SK-N-SH (cell line): ENCODE measurements at regions of chr4 and their contacts with region 1.

Region 1: DNA sequence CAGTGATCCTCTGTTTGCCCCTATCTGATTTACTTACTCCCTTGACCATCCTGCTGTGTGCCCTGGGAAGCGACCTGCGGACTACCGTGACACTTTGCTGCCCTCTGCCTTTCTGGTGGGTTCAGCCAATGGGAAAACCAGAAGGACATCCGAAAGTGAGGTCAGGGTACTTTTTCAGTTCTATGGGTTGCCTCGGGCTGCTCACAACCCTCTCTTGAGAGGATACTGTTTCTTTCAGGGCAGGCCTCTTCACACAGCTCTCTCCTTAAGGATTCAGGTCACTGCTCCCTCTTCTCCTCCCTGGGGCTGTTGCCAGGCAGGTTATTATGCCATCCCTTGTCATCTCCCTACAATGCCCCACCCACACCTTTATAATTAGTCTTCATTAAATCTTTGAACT is 21.4 kb downstream of the PLAC8 start:
- DNase-seq: peak; percentile 21
- H3K4me3 ChIP-seq: no peak overlapping the region
- H3K27ac ChIP-seq: no peak overlapping the region
- H3K4me1 ChIP-seq: no peaks in the 10 kb centered on the region
- H3K27me3 ChIP-seq: no peaks in the 10 kb centered on the region
- CTCF ChIP-seq: no peak
- EP300 ChIP-seq: no peak
- RAD21 ChIP-seq: 0 out of 2 replicates have a peak, but pooled peaks have one; percentile 14

Region 2: GRCh38 chr4:83054928-83055327 is 38.2 kb before region 1 on chr4:
- CTCF ChIA-PET with region 1: no interaction called
- POLR2A ChIA-PET with region 1: no interaction called
- DNase-seq: peak; percentile 10
- H3K4me3 ChIP-seq: no peak overlapping the region
- H3K27ac ChIP-seq: no peak overlapping the region
- H3K4me1 ChIP-seq: no peaks in the 10 kb centered on the region
- H3K27me3 ChIP-seq: no peaks in the 10 kb centered on the region
- CTCF ChIP-seq: peak; percentile 66
- EP300 ChIP-seq: no peak
- RAD21 ChIP-seq: peak; percentile 45

Region 3: GRCh38 chr4:83074086-83074704 is 18.9 kb before region 1 on chr4:
- CTCF ChIA-PET with region 1: interaction called, 12 read pairs
- POLR2A ChIA-PET with region 1: no interaction called
- DNase-seq: peak; percentile 56
- H3K4me3 ChIP-seq: peak overlapping the region in 1 of 2 experiments; percentile 14; a peak in 1 of 4 replicates
- H3K27ac ChIP-seq: peak overlapping the region in 1 of 2 experiments; percentile 83; a peak in 2 of 4 replicates
- H3K4me1 ChIP-seq: peaks cover 0 to 6% of the 10 kb centered on the region in 2 experiments; a peak in 1 of 4 replicates
- H3K27me3 ChIP-seq: no peaks in the 10 kb centered on the region
- CTCF ChIP-seq: peak; percentile 86
- EP300 ChIP-seq: no peak
- RAD21 ChIP-seq: peak; percentile 73

Region 4: DNA sequence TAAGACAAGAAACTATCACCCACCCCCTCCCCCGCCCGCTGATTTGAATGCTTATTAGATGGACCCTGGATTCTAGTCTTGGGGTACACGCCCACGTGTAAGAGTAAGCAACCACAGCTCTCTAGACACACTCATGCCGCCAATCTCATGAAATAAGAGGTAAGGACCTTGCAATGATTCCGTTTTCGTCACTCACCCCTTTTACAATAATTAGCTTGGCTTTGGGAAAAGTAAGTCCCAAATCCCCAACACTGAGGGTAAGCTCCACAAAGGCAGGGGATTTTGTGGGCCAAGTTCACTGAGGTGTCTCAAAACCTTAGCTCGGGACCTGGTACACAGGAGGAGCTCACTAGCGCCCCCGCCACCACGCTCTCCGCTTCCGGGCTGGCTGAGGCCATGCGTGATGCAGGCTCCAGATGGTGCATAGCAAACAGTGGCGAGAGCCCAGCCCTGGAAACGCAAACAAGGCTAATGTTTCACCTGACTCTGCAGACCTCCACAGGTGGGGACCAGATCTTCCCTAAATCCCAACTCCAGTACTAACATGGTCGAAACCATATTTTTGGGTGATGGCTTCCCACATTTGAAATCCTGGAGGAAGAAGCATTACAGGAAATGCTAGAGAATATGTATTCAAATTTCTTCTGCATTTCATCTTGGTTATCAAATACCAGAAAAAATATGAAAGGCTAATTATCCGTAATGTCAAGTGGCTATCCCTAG is 17.3 kb after region 1 on chr4:
- CTCF ChIA-PET with region 1: interaction called, 10 read pairs
- POLR2A ChIA-PET with region 1: no interaction called
- DNase-seq: peak; percentile 82
- H3K4me3 ChIP-seq: peak overlapping the region; percentile 62 to 67
- H3K27ac ChIP-seq: peak overlapping the region; percentile 50 to 53
- H3K4me1 ChIP-seq: peaks cover 3 to 22% of the 10 kb centered on the region in 2 experiments
- H3K27me3 ChIP-seq: no peaks in the 10 kb centered on the region
- CTCF ChIP-seq: peak; percentile 74
- EP300 ChIP-seq: peak in 1 of 2 experiments; percentile 12; a peak in 1 of 4 replicates
- RAD21 ChIP-seq: peak; percentile 33; the same call in 1 of the 2 replicates